ENCODE measurements at regions of chr6 and their contacts with region 1.

Region 1: GRCh38 chr6:112179631-112180030 is 74.7 kb downstream of the LAMA4 start:
- DNase-seq: no peak

Region 2: DNA sequence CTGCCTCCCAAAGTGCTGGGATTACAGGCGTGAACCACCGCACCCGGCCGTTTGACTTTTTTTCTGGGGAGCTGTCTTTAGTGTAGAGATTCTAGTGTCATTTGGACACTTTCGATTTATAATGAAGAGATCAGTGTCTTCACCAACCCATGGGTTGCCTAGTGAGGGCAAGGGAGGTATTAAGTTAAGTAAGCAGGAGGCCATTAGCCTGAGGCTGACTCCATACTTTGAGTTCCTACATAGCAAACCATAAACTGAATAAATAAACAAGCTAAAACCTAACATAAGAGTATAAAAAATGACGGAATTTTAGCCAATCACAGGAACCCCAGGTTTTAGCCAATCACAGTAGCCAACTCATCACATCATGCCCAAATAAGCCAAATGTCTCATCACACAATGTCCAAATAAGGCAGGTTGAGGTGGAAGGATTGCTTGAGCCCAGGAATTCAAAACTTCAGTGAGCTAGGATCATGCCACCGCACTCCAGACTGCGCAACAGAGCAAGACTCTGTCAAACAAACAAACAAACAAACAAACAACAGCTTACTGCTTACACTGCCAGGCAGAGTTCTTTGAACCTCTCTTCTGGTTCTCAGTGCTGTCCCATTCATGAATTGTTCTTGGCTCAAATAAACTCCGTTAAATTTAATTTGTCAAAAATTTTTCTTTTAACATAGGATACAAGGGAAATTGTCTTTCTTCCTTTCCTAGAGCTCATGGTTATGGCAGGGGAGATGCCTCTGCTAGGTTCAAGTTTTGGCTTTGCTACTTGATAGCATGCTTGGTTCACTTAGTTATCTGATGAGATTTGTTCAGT is 137.6 kb after region 1 on chr6:
- intact Hi-C with region 1: loop called (anchors 5 kb)
- DNase-seq: no peak

Measured in head of caudate nucleus (tissue), 42 donors.